ENCODE measurements at regions of chr6 and their contacts with region 1.

Region 1: GRCh38 chr6:26223650-26224546 is 136.7 kb downstream of the HFE start:
- DNase-seq: peak; percentile 83
- ATAC-seq: peak; percentile 83
- H3K4me3 Mint-ChIP-seq: no peak overlapping the region
- H3K27ac Mint-ChIP-seq: no peak overlapping the region
- H3K4me1 Mint-ChIP-seq: peaks cover 37% of the 10 kb centered on the region
- H3K27me3 Mint-ChIP-seq: no peaks in the 10 kb centered on the region

Region 2: GRCh38 chr6:26075063-26075717 is 148.7 kb before region 1 on chr6:
- CTCF ChIA-PET with region 1: no interaction called
- POLR2A ChIA-PET with region 1: no interaction called
- DNase-seq: no peak
- ATAC-seq: no peak
- H3K4me3 Mint-ChIP-seq: no peak overlapping the region
- H3K27ac Mint-ChIP-seq: no peak overlapping the region
- H3K4me1 Mint-ChIP-seq: peaks cover 2% of the 10 kb centered on the region
- H3K27me3 Mint-ChIP-seq: peaks cover 15% of the 10 kb centered on the region

Region 3: DNA sequence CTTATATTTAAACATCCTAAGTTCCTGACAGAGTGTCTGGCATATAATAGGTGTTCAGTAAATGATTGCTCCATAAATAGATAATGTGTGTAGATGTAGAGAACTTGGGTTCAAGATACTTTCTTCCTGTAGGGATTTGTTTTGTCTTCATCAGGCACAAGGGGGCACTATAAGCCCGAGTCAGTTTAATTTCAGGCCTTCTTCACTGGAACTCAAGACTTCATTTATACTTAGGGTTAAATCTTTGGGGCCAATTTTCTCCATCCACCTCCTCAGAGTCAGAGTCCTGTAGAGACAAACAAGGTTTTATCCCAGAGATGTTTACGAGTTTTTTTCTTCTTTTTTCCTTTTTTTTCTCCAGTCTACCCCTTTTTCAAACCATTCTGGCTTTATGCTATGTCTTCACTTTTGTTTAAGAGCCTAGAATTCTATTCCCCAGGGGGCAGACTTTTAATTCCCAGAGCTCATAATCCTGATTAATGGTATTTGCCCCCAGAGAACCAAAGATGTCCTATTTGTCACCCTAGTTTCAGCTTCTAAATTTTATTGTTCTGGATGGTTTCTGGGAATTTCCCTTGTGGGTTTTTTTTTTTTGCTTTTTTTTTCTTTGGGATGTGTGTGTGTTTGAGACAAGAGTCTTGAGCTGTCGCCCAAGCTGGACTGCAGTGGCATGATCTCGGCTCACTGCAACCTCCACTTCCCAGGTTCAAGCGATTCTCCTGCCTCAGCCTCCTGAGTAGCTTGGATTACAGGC is 48.3 kb before region 1 on chr6:
- CTCF ChIA-PET with region 1: interaction called, 14 read pairs
- POLR2A ChIA-PET with region 1: interaction called, 8 read pairs
- DNase-seq: peak; percentile 82
- ATAC-seq: peak; percentile 11
- H3K4me3 Mint-ChIP-seq: peak overlapping the region; percentile 38
- H3K27ac Mint-ChIP-seq: peak overlapping the region; percentile 59
- H3K4me1 Mint-ChIP-seq: peaks cover 42% of the 10 kb centered on the region
- H3K27me3 Mint-ChIP-seq: no peaks in the 10 kb centered on the region

Region 4: GRCh38 chr6:26240154-26241032 is 16.5 kb after region 1 on chr6:
- CTCF ChIA-PET with region 1: interaction called, 3 read pairs
- POLR2A ChIA-PET with region 1: interaction called, 674 read pairs
- DNase-seq: peak; percentile 94
- ATAC-seq: peak; percentile 81
- H3K4me3 Mint-ChIP-seq: peak overlapping the region; percentile 74
- H3K27ac Mint-ChIP-seq: peak overlapping the region; percentile 96
- H3K4me1 Mint-ChIP-seq: peaks cover 51% of the 10 kb centered on the region
- H3K27me3 Mint-ChIP-seq: peaks cover 2% of the 10 kb centered on the region